Left cardiac atrium (tissue), 4 donors: ENCODE measurements at regions of chr10 and their contacts with region 1.

Region 1: GRCh38 chr10:93916257-93917063 is 22.7 kb downstream of the SLC35G1 start:
- DNase-seq: no peak
- ATAC-seq: peak; percentile 83 to 84

Region 2: DNA sequence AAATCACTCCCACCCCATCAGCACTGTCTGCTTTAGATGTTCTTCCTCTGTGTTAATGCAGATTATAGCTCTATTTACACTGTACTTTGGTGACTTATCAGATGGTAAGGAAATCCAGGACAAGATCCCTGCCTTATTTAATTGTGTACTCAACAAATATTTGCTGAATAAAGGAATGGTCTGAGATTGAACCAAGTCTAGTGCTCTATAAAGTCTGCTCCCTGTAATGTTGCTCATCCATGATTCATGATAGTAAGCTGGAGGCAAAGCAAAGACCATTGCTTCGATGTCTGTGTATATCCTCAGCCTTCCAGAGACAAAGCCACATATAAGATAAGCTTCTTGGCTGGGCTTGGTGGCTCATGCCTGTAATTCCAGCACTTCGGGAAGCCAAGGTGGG is 110.7 kb after region 1 on chr10:
- intact Hi-C with region 1: no loop called
- DNase-seq: no peak
- ATAC-seq: no peak

Region 3: GRCh38 chr10:94066411-94066810 is 150.0 kb after region 1 on chr10:
- intact Hi-C with region 1: loop called in 1 of 2 experiments (anchors 10 kb)
- DNase-seq: peak; percentile 34
- ATAC-seq: peak; percentile 45 to 59

Region 4: GRCh38 chr10:94172332-94172731 is 255.9 kb after region 1 on chr10:
- intact Hi-C with region 1: no loop called
- DNase-seq: no peak
- ATAC-seq: no peak

Region 5: GRCh38 chr10:94213001-94213530 is 296.6 kb after region 1 on chr10:
- intact Hi-C with region 1: loop called in 1 of 2 experiments (anchors 10 kb)
- DNase-seq: no peak
- ATAC-seq: peak in 1 of 2 donors; percentile 56

Region 6: DNA sequence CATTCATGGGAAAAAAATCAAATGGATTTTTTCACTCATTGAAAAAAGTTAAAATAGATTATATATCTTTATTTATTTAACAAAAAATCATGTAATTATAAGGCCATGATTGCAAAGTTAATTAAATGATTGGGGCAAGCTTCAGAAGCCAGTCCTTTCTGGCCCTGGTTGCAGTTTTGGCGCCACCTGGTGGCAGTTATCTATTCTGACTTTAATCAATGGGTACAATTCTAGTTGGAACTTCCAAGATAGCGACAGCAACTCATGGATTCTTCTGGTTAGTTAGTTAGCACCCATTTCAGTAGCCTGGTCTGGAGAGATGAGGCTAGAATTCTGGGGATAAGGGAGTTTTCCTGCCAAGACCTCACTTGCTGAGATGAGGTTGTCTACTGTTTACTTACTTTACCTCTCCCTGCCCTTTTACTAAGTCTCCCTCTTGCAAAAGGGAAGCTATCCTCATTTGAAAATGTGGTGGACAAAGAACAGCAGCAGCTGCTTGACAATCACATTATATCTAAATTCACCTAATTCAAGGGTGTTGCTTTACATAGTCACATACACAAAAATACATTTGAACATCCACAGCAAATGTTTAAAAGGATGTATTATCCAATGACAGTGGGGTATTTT is 403.9 kb after region 1 on chr10:
- intact Hi-C with region 1: loop called in 1 of 2 experiments (anchors 5 kb)
- DNase-seq: peak; percentile 76
- ATAC-seq: peak; percentile 53 to 65